GM10248 (cell line): ENCODE measurements at regions of chr9 and their contacts with region 1.

Region 1: DNA sequence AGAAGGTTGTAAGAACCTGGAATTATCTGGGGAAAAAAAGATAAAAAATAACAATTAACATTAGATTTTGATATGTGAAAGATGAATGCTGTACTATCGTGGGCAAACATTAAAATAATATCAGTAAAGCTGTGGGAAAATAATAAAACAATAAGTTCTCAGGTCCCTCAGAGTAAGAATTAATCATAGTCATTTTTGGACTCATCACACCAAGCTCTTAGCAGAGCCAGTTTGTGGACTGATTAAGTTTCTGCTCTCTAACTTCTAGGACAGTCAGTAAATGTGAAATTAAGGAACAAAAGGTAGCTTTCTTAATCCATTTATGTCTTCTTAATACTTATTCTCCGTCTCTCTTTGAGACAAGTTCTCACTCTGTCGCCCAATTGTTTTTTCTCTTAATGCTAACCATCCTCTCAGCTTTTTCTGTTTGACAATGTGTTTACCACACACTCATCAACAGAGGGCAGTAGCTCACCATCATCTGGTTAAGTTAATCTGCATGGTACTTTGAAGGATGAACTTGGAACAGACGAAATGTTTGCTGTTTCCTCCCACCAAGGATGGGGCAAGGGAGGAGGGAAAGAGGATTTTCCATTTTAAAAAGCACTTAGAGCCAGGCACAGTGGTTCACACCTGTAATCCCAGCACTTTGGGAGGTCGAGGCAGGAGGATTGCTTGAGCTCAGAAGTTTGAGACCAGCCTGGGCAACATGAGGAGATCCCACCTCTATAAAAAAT is 5.3 kb upstream of the ACO1 start:
- DNase-seq: peak; percentile 68
- CTCF ChIP-seq: peak; percentile 85

Region 2: DNA sequence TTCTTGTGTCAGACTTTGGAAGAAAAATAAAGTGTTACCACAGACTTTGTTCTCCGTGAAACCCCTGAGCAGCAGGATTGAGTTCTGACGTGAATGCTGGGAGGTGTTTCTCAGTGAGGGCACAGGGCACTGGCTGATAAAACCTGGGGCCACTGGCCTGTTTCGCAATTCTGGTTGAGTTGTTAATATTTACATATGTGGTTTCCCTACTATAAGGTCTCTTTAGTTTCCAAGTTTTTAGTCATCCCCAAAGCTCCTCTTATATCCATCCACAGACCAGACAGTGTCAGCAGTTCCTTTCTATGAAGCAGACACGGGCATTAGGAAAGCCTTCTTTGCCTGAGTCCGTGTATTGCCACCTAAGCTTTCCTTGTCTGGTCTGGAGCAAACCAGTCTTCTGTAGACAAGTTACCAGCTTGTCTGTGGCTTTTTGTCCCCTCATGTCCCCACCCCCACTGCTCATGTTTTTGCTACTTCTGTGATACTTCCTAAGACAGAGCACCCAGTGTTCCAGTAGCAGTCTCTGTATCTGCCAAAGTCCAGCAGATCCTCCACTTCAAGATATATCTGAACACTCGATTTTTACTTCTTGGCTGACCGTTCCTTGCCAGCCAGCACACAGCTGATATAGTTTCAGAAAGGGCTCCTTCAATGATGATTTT is 47.2 kb after region 1 on chr9:
- CTCF ChIA-PET with region 1: interaction called, 30 read pairs
- POLR2A ChIA-PET with region 1: no interaction called
- DNase-seq: no peak
- CTCF ChIP-seq: no peak

Region 3: GRCh38 chr9:32543047-32543446 is 163.9 kb after region 1 on chr9:
- CTCF ChIA-PET with region 1: interaction called, 45 read pairs
- POLR2A ChIA-PET with region 1: no interaction called
- DNase-seq: no peak
- CTCF ChIP-seq: no peak

Region 4: DNA sequence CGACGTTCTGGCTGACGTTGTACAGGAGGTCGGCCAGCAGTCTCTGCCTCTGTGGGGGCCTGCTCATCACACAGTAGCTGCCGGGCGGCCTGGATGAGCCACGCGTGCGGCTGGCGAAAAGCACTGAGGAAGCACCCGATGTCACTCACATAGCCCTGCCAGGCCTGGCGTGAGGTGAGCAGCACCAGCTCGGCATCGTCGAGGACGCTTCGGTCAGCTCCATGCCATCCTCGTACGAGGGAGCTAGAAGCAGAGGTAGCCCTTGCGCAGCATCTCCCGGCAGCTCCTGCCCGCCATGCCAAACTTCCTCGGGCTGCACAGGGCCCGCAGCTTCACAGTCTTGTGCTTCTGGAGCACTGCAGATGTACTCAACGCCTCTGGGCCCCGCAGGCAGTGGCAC is 187.6 kb after region 1 on chr9:
- CTCF ChIA-PET with region 1: interaction called, 872 read pairs
- POLR2A ChIA-PET with region 1: no interaction called
- DNase-seq: no peak
- CTCF ChIP-seq: no peak

Region 5: GRCh38 chr9:32603914-32604741 is 225.0 kb after region 1 on chr9:
- CTCF ChIA-PET with region 1: interaction called, 17 read pairs
- POLR2A ChIA-PET with region 1: no interaction called
- DNase-seq: no peak
- CTCF ChIP-seq: no peak

Region 6: DNA sequence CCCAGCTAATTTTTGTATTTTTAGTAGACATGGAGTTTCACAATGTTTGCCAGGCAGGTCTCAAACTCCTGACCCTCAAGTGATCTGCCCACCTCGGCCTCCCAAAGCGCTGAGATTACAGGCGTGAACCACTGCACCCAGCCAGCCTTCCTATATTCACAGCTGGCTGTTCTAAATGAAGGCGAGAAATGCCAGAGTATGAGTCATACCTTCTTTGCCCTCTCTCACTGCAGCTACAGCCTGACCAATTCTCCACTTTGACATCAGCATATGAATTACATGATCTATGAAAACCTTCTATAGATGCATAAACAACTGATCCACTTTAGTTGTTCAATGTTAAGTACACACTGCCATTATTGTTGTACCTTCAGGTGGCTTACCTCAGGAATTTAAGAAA is 607.8 kb after region 1 on chr9:
- CTCF ChIA-PET with region 1: interaction called, 14 read pairs
- POLR2A ChIA-PET with region 1: no interaction called
- DNase-seq: no peak
- CTCF ChIP-seq: no peak